AG04450 (cell line): ENCODE measurements at regions of chr2 and their contacts with region 1.

Region 1: GRCh38 chr2:20062615-20063545 is 11.5 kb upstream of the LAPTM4A start:
- DNase-seq: peak; percentile 96
- H3K4me3 ChIP-seq: no peak overlapping the region
- H3K27ac ChIP-seq: peak overlapping the region; percentile 95
- H3K27me3 ChIP-seq: no peaks in the 10 kb centered on the region
- CTCF ChIP-seq: peak; percentile 41

Region 2: DNA sequence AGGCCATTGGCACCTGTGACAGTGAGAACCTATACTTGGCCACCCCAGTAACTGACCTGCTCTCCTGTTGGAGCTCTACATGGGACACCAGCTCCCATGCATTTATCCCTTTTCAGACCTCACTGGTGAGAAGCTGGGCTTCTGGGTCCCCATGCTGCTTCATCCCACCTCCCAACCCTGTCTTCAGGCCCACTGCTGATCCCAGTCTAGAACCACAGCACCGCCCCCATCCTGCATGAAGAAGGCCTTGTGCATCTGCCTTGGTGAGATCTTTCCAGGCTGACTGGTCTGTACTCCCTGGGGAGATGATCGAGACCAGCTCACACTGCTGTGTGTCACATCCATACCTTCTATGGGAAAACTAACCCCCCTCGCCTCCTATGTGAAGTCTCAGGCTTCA is 183.8 kb before region 1 on chr2:
- CTCF ChIA-PET with region 1: no interaction called
- POLR2A ChIA-PET with region 1: no interaction called
- DNase-seq: no peak
- H3K4me3 ChIP-seq: no peak overlapping the region
- H3K27ac ChIP-seq: no peak overlapping the region
- H3K27me3 ChIP-seq: peaks cover 19% of the 10 kb centered on the region
- CTCF ChIP-seq: no peak

Region 3: DNA sequence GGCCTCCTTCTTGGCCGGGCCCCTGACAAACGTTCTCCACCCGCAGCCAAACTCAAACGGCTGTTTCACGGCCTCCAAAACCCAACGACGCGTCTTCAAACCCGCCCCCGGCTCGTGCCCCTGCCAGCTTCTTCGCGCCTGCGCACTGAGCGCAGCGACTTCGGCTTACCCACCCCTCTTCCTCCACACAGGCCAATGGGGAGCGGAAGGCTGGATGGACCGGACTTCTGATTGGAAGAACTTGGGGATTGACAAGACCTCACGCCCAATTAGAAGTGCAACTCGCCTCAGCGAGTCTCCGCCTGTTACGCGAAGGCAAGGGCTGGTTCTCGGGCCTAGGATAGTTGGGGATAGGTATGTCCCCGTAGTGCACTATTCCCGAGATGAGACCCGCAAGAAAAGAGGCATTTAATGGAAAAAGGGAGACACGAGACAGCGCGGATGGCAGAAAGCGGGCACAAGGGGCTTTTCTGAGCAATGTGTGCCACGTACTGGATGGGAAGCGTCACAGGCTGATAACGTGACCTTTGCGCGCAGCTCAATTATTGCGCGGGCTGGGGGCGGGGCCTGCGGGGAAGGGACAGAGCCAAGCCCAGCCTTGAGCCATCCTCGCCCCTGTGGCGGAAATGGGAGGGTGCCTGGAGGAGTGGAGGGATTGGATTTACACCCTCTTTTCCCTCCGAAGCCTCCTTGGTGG is 11.2 kb before region 1 on chr2 and contains the start of gene LAPTM4A:
- CTCF ChIA-PET with region 1: interaction called, 8 read pairs
- POLR2A ChIA-PET with region 1: interaction called, 54 read pairs
- DNase-seq: peak; percentile 100
- H3K4me3 ChIP-seq: peak within 1 kb of the TSS; percentile 97
- H3K27ac ChIP-seq: peak within 1 kb of the TSS; percentile 100
- H3K27me3 ChIP-seq: no peaks in the 10 kb centered on the region
- CTCF ChIP-seq: 0 out of 2 replicates have a peak, but pooled peaks have one; percentile 10
- polyA plus RNA-seq, gene LAPTM4A: 1,309 and 1,416 TPM in 2 replicates